CD4-positive, alpha-beta T cell (primary cell): ENCODE measurements at regions of chr1 and their contacts with region 1.

Region 1: DNA sequence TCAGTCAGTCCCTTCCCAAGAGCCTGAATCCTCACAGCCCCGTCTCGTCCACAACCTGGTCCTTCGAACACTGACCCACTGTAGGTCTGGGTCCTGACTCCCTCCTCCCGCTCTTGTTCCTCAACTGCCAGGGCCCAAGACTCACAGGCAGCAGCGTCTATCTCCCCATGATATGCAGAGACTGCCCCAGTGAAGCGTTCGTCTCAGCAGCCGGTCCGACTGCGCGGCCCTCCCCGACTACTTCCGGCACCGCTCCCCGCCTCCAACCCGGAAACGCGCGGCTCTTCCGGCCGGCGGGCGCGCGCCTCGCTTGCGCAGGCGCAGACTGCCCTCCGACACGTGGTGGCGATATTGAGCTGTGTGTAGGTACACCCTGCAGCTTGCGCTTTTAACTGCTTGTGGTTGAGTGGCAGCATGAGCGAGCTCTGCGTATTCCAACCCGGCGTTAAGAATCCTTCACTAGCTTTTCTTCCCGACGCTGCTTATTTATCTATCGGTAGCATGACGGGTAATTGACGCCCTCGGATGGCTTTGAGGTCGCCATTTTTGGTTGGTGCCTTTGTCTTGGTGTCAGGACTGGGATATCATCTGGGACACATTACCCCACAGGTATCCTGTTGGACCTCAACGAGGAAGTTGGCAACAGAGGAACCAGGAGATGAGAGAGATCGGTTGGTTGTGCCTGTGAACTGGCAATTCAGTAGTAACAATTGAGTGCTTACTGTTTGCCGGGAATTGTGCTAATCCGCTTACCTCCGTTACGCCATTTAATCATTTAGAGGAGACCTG is at the start of gene TAF12:
- DNase-seq: peak; percentile 87 to 98 (median 92)
- ATAC-seq: peak; percentile 81
- H3K4me3 ChIP-seq: peak within 1 kb of the TSS; percentile 99
- H3K4me3 Mint-ChIP-seq: peak within 1 kb of the TSS; percentile 92
- H3K27ac ChIP-seq: peak within 1 kb of the TSS; percentile 94
- H3K27ac Mint-ChIP-seq: peak within 1 kb of the TSS; percentile 97
- H3K4me1 ChIP-seq: peaks cover 54% of the 10 kb centered on the region
- H3K4me1 Mint-ChIP-seq: peaks cover 62% of the 10 kb centered on the region
- H3K27me3 ChIP-seq: no peaks in the 10 kb centered on the region
- H3K27me3 Mint-ChIP-seq: no peaks in the 10 kb centered on the region
- CTCF ChIP-seq: peak; percentile 63
- total RNA-seq, gene TAF12: 7.0 to 8.0 TPM

Region 2: GRCh38 chr1:28329395-28330153 is 313.5 kb before region 1 on chr1:
- CTCF ChIA-PET with region 1: no interaction called
- POLR2A ChIA-PET with region 1: interaction called, 20 read pairs
- intact Hi-C with region 1: no loop called
- DNase-seq: peak in 10 of 14 experiments; percentile 17 to 73 (median 36)
- ATAC-seq: peak; percentile 21
- H3K4me3 ChIP-seq: peak overlapping the region; percentile 67
- H3K4me3 Mint-ChIP-seq: peak overlapping the region; percentile 94
- H3K27ac ChIP-seq: peak overlapping the region; percentile 90 to 93
- H3K27ac Mint-ChIP-seq: peak overlapping the region; percentile 88
- H3K4me1 ChIP-seq: peaks cover 25% of the 10 kb centered on the region
- H3K4me1 Mint-ChIP-seq: peaks cover 35% of the 10 kb centered on the region
- H3K27me3 ChIP-seq: no peaks in the 10 kb centered on the region
- H3K27me3 Mint-ChIP-seq: no peaks in the 10 kb centered on the region
- CTCF ChIP-seq: no peak

Region 3: GRCh38 chr1:28412731-28413130 is 230.3 kb before region 1 on chr1:
- CTCF ChIA-PET with region 1: no interaction called
- POLR2A ChIA-PET with region 1: no interaction called
- intact Hi-C with region 1: no loop called
- DNase-seq: no peak
- ATAC-seq: no peak
- H3K4me3 ChIP-seq: no peak overlapping the region
- H3K4me3 Mint-ChIP-seq: no peak overlapping the region
- H3K27ac ChIP-seq: no peak overlapping the region
- H3K27ac Mint-ChIP-seq: no peak overlapping the region
- H3K4me1 ChIP-seq: peaks cover 9% of the 10 kb centered on the region
- H3K4me1 Mint-ChIP-seq: peaks cover 22% of the 10 kb centered on the region
- H3K27me3 ChIP-seq: no peaks in the 10 kb centered on the region
- H3K27me3 Mint-ChIP-seq: no peaks in the 10 kb centered on the region
- CTCF ChIP-seq: no peak

Region 4: DNA sequence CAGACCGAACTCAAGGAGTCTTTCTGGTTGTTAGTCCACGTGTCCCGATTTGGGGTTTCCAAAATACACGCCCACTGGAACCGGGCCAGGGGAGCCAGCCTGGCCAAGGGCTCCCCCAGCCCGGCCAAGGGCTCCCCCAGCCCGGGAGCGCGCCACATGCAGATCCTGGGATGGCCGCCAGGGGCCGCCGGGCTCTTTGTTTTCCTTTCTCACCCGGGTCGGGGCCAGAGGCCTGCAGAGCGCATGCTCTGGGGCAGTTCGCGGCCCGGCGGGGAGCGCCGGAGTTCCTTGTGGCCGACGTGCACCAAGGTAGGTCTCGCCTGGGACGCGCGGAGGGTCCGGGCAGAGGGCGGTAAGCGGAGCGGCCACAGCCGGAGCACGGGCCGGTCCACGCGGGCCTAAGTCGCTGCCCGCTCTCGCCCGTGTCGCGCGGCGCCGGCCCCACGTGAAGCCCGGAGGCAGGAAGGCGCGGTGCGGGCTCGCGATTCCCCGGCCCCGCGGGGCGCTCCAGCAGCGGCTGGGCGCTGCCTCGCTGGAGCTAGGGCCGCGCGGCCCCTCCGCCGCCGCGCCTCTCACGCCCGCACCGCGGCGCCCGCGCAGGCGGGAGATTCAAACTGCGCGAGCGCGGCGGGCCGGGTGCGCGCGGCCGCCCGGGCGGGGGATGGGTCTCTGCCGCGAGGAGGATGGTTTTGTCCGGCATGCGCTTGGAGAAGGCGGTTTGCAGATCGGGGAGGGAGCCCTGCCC is 124.9 kb before region 1 on chr1:
- CTCF ChIA-PET with region 1: no interaction called
- POLR2A ChIA-PET with region 1: interaction called, 4 read pairs
- intact Hi-C with region 1: loop called in 1 of 2 experiments (anchors 2 kb)
- DNase-seq: peak; percentile 80 to 93 (median 86)
- ATAC-seq: peak; percentile 90
- H3K4me3 ChIP-seq: peak overlapping the region; percentile 66
- H3K4me3 Mint-ChIP-seq: peak overlapping the region; percentile 91
- H3K27ac ChIP-seq: peak overlapping the region; percentile 23 to 29
- H3K27ac Mint-ChIP-seq: peak overlapping the region; percentile 83
- H3K4me1 ChIP-seq: peaks cover 24% of the 10 kb centered on the region
- H3K4me1 Mint-ChIP-seq: peaks cover 33% of the 10 kb centered on the region
- H3K27me3 ChIP-seq: no peaks in the 10 kb centered on the region
- H3K27me3 Mint-ChIP-seq: no peaks in the 10 kb centered on the region
- CTCF ChIP-seq: peak; percentile 94

Region 5: DNA sequence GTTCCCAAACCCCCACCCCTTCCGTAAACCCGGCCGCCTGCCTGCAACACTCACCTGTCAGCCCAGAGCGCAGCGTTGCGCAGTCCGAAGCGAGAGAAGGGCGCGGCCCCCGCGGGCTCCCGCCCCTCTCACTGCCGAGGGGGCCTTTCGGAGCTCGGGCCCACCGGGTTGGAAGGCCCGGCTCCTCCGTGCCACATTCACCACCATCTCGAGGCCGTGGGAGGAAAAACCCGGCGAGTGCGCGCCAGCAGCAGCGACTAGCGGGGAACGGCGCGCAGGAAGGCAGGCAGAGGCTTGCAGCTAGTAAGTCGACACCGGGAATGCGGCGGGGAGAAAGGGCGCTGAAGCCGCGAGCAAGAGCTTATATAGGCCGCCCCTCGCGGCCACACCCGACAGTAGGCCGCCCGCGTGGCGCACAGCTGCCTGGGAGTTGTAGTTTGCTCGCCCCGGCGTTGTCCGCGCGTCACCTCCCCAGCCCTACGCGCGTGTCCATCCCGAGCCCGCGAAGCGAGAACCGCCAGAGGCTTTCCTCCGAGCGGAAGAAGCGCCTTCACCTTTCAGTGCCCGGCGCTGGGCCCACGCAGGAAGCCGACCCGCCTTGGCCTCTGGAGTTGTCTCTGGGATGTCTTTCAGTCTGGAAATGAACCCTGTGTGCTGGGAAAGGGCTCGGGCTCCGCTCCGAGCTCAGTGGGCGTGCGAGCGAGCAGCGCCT is 61.3 kb before region 1 on chr1:
- CTCF ChIA-PET with region 1: interaction called, 11 read pairs
- POLR2A ChIA-PET with region 1: interaction called, 107 read pairs
- intact Hi-C with region 1: loop called (anchors 1 kb)
- DNase-seq: peak; percentile 85 to 97 (median 92)
- ATAC-seq: peak; percentile 83
- H3K4me3 ChIP-seq: peak overlapping the region; percentile 93
- H3K4me3 Mint-ChIP-seq: peak overlapping the region; percentile 94
- H3K27ac ChIP-seq: peak overlapping the region; percentile 70 to 83
- H3K27ac Mint-ChIP-seq: peak overlapping the region; percentile 81
- H3K4me1 ChIP-seq: peaks cover 39% of the 10 kb centered on the region
- H3K4me1 Mint-ChIP-seq: peaks cover 48% of the 10 kb centered on the region
- H3K27me3 ChIP-seq: no peaks in the 10 kb centered on the region
- H3K27me3 Mint-ChIP-seq: no peaks in the 10 kb centered on the region
- CTCF ChIP-seq: no peak

Region 6: GRCh38 chr1:28684937-28685336 is 41.9 kb after region 1 on chr1:
- CTCF ChIA-PET with region 1: no interaction called
- POLR2A ChIA-PET with region 1: interaction called, 5 read pairs
- intact Hi-C with region 1: loop called in 1 of 2 experiments (anchors 10 kb)
- DNase-seq: no peak
- ATAC-seq: no peak
- H3K4me3 ChIP-seq: no peak overlapping the region
- H3K4me3 Mint-ChIP-seq: no peak overlapping the region
- H3K27ac ChIP-seq: no peak overlapping the region
- H3K27ac Mint-ChIP-seq: no peak overlapping the region
- H3K4me1 ChIP-seq: no peaks in the 10 kb centered on the region
- H3K4me1 Mint-ChIP-seq: no peaks in the 10 kb centered on the region
- H3K27me3 ChIP-seq: no peaks in the 10 kb centered on the region
- H3K27me3 Mint-ChIP-seq: no peaks in the 10 kb centered on the region
- CTCF ChIP-seq: no peak

Region 7: GRCh38 chr1:28775121-28775944 is 132.3 kb after region 1 on chr1:
- CTCF ChIA-PET with region 1: no interaction called
- POLR2A ChIA-PET with region 1: interaction called, 36 read pairs
- intact Hi-C with region 1: no loop called
- DNase-seq: peak; percentile 39 to 89 (median 66)
- ATAC-seq: peak; percentile 93
- H3K4me3 ChIP-seq: peak overlapping the region; percentile 54
- H3K4me3 Mint-ChIP-seq: peak overlapping the region; percentile 88
- H3K27ac ChIP-seq: peak overlapping the region; percentile 26 to 38
- H3K27ac Mint-ChIP-seq: peak overlapping the region; percentile 90
- H3K4me1 ChIP-seq: peaks cover 14% of the 10 kb centered on the region
- H3K4me1 Mint-ChIP-seq: peaks cover 13% of the 10 kb centered on the region
- H3K27me3 ChIP-seq: no peaks in the 10 kb centered on the region
- H3K27me3 Mint-ChIP-seq: no peaks in the 10 kb centered on the region
- CTCF ChIP-seq: no peak